ENCODE measurements at regions of chr1 and their contacts with region 1.

Region 1: DNA sequence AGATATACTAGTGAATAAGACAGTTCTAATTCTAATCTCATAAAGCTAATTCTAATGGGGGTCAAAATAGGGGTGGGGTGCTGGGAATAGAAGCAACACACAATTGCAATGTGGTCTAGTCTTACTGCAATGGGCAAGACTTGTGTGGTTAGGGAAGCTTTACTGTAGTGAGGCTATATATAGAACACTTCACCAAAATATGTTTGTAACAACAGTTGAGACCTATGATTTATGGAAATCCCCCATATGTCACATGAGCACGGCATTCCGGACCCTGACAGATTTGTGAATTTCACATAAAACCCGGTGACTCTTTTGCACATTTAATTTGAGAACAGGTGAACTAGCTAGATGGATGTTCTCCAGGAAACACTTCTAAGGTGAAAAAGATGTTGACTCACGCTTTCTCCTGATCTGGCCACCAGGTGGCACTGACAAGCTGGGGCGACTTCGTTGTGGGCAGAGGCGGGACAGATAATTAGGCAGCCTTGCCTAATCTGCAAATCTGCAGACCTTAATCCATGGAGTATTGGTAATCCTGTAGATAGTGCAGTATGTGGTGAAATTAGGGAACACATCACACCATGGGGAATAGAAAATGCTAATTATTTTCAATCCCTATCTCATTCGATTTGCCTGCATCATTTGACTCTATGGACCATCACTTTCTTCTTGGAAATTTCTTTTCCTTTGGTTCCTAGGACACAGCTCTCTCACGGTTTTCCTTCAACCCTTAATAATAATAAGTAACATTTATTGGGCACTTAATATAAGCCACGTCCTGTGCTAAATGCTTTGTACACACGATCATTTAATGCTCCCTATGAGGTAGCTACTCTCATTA is 37.7 kb downstream of the KIAA0040 start:
- DNase-seq: peak; percentile 57
- H3K4me3 Mint-ChIP-seq: no peak overlapping the region
- H3K27ac Mint-ChIP-seq: no peak overlapping the region
- H3K4me1 Mint-ChIP-seq: peaks cover 33% of the 10 kb centered on the region
- H3K27me3 Mint-ChIP-seq: peaks cover 29% of the 10 kb centered on the region

Region 2: DNA sequence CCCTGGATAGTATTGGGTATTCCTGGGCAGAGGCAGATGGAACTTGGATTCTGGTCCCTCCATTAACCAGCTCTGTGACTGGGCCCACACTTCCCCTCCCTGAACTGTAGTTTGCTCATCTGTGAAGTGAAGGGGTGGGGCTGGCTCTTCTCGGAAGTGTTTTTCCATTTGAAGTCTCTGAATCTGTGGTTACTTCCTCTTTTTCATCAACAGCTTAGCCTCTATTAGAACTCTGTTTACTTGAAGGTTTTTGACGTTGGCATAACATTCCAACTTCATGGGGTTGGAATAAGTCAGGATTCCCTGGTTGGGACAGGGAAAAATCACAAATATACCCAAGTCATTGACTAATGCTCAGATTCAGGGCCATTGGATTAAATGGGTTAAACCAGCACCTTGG is 34.1 kb after region 1 on chr1:
- intact Hi-C with region 1: loop called (anchors 1 kb)
- DNase-seq: peak; percentile 60
- H3K4me3 Mint-ChIP-seq: peak overlapping the region; percentile 99
- H3K27ac Mint-ChIP-seq: peak overlapping the region; percentile 84
- H3K4me1 Mint-ChIP-seq: peaks cover 75% of the 10 kb centered on the region
- H3K27me3 Mint-ChIP-seq: no peaks in the 10 kb centered on the region

Region 3: GRCh38 chr1:175208773-175209492 is 54.1 kb after region 1 on chr1:
- intact Hi-C with region 1: loop called (anchors 2 kb)
- DNase-seq: peak; percentile 60
- H3K4me3 Mint-ChIP-seq: peak overlapping the region; percentile 81
- H3K27ac Mint-ChIP-seq: peak overlapping the region; percentile 98
- H3K4me1 Mint-ChIP-seq: peaks cover 67% of the 10 kb centered on the region
- H3K27me3 Mint-ChIP-seq: peaks cover 2% of the 10 kb centered on the region

Region 4: GRCh38 chr1:175319418-175320230 is 164.8 kb after region 1 on chr1:
- intact Hi-C with region 1: loop called (anchors 1 kb)
- DNase-seq: peak; percentile 47
- H3K4me3 Mint-ChIP-seq: no peak overlapping the region
- H3K27ac Mint-ChIP-seq: no peak overlapping the region
- H3K4me1 Mint-ChIP-seq: peaks cover 12% of the 10 kb centered on the region
- H3K27me3 Mint-ChIP-seq: peaks cover 11% of the 10 kb centered on the region

Region 5: GRCh38 chr1:175338387-175339135 is 183.7 kb after region 1 on chr1:
- intact Hi-C with region 1: loop called (anchors 1 kb)
- DNase-seq: peak; percentile 30
- H3K4me3 Mint-ChIP-seq: no peak overlapping the region
- H3K27ac Mint-ChIP-seq: no peak overlapping the region
- H3K4me1 Mint-ChIP-seq: peaks cover 5% of the 10 kb centered on the region
- H3K27me3 Mint-ChIP-seq: peaks cover 17% of the 10 kb centered on the region

Region 6: DNA sequence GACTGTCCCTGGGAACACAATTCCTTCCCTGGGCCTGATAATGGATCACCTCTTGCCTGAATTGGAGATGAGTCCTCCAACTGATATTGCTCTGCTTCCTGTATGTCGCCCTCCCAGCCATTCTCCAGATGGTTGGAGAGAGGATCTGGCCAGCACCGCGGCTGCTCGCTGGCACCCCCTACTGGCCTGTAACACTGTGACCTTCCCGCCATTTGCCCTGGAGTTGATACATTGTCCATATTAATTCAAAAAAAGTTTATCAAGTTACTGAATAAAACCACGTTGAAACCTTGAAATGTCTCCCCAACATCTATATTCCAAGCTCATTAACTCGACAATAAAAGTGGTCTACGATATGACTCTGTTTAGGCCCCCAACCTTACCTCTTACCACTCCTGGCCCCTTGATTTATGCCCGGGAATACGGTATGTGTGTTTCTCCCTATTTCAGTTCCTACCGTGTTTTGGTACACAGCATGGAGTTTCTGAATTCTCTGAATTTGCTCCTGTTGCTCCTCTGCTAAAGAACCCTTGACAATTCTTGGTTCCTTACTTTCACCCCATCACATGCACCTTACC is 279.5 kb after region 1 on chr1:
- intact Hi-C with region 1: loop called (anchors 1 kb)
- DNase-seq: no peak
- H3K4me3 Mint-ChIP-seq: no peak overlapping the region
- H3K27ac Mint-ChIP-seq: no peak overlapping the region
- H3K4me1 Mint-ChIP-seq: no peaks in the 10 kb centered on the region
- H3K27me3 Mint-ChIP-seq: peaks cover 8% of the 10 kb centered on the region

Region 7: GRCh38 chr1:176073524-176074157 is 918.8 kb after region 1 on chr1:
- intact Hi-C with region 1: loop called (anchors 1 kb)
- DNase-seq: no peak
- H3K4me3 Mint-ChIP-seq: no peak overlapping the region
- H3K27ac Mint-ChIP-seq: no peak overlapping the region
- H3K4me1 Mint-ChIP-seq: no peaks in the 10 kb centered on the region
- H3K27me3 Mint-ChIP-seq: no peaks in the 10 kb centered on the region